ENCODE measurements at regions of chr5 and their contacts with region 1.

Region 1: DNA sequence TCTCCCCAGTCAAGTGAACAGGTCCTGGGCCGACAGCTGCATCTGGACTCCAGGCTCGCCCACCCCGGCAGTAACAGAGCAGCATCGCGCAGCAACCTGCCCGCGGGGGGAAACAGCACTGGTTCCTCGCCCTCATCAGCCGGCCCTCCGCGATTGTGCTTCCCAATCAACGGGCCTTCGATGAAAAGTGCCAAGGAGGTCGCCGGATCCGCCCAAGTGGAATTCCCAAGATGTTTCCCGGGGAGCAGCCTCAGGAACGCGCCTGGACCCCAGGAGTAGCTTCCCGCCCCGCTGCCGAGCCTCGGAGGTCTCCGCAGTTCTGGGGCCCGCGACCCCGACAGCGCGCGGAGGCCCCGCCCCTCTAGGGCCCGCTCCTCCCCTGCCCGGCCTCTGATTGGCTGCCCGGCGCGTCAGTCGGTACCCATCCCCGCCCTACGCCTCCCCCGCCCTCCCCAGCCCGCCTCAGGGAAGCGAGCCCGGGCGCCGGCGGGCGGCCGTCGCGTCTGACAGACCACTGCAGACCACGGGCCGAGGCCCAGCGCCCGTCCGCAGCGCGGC is at the start of gene OTULINL:
- DNase-seq: peak; percentile 87
- ATAC-seq: peak; percentile 87
- H3K4me3 ChIP-seq: peak within 1 kb of the TSS; percentile 81
- H3K27ac ChIP-seq: peak within 1 kb of the TSS; percentile 97
- H3K4me1 ChIP-seq: peaks cover 43% of the 10 kb centered on the region
- H3K27me3 ChIP-seq: no peaks in the 10 kb centered on the region
- CTCF ChIP-seq: no peak
- total RNA-seq, gene OTULINL: 46.4 and 54.6 TPM in 2 replicates

Region 2: DNA sequence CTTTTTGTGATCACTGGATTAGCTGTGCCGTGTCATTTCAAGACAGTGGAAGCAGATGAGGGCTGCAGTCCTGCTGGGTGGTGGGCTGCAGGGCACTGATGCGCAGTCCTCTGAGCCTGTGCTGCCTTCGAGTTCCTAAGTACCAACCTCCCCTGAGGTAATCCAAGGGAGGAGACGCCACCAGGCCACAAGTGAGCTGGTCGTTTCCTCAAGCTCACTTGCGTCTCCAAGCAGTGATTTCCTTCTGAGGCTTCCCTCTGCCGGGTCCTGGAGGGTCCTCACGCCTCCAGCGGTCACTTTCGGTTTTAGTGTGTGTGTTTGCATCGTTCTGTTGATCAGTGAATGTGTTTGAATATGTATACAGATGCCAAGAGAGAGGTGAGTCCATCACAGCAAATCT is 322.6 kb before region 1 on chr5:
- CTCF ChIA-PET with region 1: no interaction called
- POLR2A ChIA-PET with region 1: no interaction called
- intact Hi-C with region 1: no loop called
- DNase-seq: no peak
- ATAC-seq: no peak
- H3K4me3 ChIP-seq: no peak overlapping the region
- H3K27ac ChIP-seq: no peak overlapping the region
- H3K4me1 ChIP-seq: peaks cover 63% of the 10 kb centered on the region
- H3K27me3 ChIP-seq: no peaks in the 10 kb centered on the region
- CTCF ChIP-seq: no peak

Region 3: GRCh38 chr5:14405267-14405666 is 176.1 kb before region 1 on chr5:
- CTCF ChIA-PET with region 1: no interaction called
- POLR2A ChIA-PET with region 1: interaction called, 4 read pairs
- intact Hi-C with region 1: loop called (anchors 2 kb)
- DNase-seq: peak; percentile 72
- ATAC-seq: peak; percentile 58
- H3K4me3 ChIP-seq: peak overlapping the region; percentile 35
- H3K27ac ChIP-seq: peak overlapping the region; percentile 90
- H3K4me1 ChIP-seq: peaks cover 42% of the 10 kb centered on the region
- H3K27me3 ChIP-seq: no peaks in the 10 kb centered on the region
- CTCF ChIP-seq: peak; percentile 83

Region 4: DNA sequence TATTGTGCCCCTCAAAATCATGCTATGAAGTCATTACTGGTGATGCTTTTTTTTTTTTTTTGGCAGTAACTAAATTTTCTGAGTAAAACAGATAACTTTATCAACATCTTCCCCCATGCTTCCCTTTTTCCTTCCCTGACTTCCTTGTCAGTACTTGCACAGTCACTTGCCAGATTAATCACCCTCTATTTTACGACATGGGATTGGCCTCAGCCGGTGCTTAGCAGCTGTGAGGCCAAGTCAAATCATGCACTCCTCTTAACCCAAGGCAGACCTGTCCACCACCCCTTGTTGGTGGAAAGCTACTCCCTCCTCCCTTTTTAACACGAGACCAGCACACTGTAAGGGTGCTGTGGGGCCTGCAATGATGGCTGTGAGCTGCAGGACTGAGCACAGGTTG is 117.8 kb before region 1 on chr5:
- CTCF ChIA-PET with region 1: no interaction called
- POLR2A ChIA-PET with region 1: no interaction called
- intact Hi-C with region 1: loop called (anchors 5 kb)
- DNase-seq: peak; percentile 89
- ATAC-seq: peak; percentile 93
- H3K4me3 ChIP-seq: no peak overlapping the region
- H3K27ac ChIP-seq: peak overlapping the region; percentile 90
- H3K4me1 ChIP-seq: peaks cover 39% of the 10 kb centered on the region
- H3K27me3 ChIP-seq: no peaks in the 10 kb centered on the region
- CTCF ChIP-seq: no peak

Region 5: DNA sequence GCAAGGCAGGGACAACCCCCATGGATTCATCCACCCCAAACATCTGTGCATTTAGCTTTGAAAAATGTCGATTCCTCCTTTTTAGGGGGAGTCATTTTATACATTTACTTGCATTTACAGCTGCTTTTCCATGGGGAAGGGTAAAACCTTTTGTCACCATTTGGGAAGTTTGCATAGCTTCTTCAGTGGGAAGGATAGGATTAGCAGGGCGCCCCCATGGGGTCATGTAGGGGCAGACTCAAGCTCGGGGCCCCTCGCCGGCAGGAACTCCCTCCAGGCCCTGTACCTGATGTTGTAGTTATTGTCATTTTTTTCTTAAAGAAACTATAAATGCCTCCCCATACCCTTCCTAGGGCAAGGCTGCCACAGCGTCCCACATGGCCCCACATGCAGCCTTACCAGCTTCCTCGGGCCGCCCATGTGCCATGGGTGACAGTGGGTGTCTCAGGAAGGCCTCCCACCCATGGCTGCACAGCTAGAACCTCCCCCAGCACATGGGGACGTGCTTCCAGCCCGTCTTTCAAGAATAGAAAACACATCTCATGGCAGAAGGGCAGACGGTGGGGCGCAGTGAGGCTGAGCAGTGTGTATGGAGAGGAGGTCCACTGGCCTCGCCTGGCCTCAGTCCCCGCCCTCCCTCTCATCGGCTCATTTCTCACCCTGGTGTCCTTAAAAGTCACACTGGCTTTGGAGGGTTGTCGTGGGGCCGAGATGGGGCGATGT is 75.9 kb before region 1 on chr5:
- CTCF ChIA-PET with region 1: interaction called, 12 read pairs
- POLR2A ChIA-PET with region 1: interaction called, 4 read pairs
- intact Hi-C with region 1: loop called (anchors 5 kb)
- DNase-seq: no peak
- ATAC-seq: no peak
- H3K4me3 ChIP-seq: no peak overlapping the region
- H3K27ac ChIP-seq: no peak overlapping the region
- H3K4me1 ChIP-seq: no peaks in the 10 kb centered on the region
- H3K27me3 ChIP-seq: no peaks in the 10 kb centered on the region
- CTCF ChIP-seq: peak; percentile 51

Region 6: DNA sequence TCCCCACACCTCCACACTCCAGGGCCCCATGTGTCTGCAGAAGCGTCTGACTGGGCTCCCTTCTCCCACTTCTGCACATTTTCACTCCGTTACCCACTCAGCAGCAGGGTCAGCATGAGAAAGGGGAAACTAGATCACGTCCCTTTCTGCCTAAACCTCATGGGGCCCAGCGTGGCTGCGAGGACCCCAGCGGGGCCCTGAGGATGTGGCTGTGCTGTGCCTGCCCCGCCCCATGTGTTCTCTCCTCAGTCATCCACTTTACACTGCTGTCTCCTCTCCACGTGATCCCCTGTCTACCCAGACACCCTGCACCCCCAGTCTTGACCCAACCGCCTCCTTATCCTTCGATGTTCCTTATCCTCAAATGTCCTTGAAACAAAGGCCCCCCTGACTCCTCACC is 59.7 kb before region 1 on chr5:
- CTCF ChIA-PET with region 1: no interaction called
- POLR2A ChIA-PET with region 1: no interaction called
- intact Hi-C with region 1: loop called (anchors 5 kb)
- DNase-seq: no peak
- ATAC-seq: no peak
- H3K4me3 ChIP-seq: no peak overlapping the region
- H3K27ac ChIP-seq: no peak overlapping the region
- H3K4me1 ChIP-seq: no peaks in the 10 kb centered on the region
- H3K27me3 ChIP-seq: no peaks in the 10 kb centered on the region
- CTCF ChIP-seq: no peak

Region 7: DNA sequence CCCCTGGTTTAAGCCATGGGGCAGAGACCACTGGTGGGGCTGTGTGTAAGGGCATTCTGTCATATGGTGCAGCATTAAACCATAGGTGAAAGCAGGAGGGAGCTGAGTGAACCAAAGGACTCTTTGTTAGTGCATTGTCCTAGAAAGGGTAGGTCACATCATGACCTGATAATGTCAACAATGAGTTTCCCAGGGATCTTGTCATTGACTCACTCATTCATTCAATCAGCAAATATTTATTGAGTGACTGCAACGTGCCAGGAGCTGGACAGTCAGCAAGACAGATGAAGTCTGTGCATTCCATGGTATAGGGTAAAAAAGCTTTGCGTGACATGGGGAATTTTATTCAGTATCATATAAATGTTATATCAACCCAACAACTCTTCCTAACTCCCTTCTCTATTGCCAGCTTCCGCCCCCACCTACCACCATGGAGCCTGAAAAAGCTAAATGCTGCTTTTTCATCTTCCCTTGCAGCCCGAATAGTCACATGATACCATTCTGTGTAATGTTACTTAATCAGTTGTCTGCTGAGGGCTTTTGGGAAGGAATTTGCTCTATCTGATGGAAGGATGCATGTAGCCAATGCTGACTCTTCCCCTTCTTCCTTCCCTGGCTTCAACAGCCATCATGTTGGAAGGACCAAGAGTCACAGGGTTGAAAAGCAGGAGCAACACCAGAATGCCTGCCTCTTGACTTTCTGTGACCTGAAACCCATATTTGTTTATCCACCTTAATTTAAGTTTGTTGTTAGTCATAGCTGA is 11.3 kb before region 1 on chr5:
- CTCF ChIA-PET with region 1: interaction called, 3 read pairs
- POLR2A ChIA-PET with region 1: no interaction called
- intact Hi-C with region 1: loop called (anchors 1 kb)
- DNase-seq: peak; percentile 99
- ATAC-seq: peak; percentile 90
- H3K4me3 ChIP-seq: peak overlapping the region; percentile 16; the same call in 1 of the 2 replicates
- H3K27ac ChIP-seq: peak overlapping the region; percentile 98
- H3K4me1 ChIP-seq: peaks cover 38% of the 10 kb centered on the region
- H3K27me3 ChIP-seq: no peaks in the 10 kb centered on the region
- CTCF ChIP-seq: no peak

Region 8: DNA sequence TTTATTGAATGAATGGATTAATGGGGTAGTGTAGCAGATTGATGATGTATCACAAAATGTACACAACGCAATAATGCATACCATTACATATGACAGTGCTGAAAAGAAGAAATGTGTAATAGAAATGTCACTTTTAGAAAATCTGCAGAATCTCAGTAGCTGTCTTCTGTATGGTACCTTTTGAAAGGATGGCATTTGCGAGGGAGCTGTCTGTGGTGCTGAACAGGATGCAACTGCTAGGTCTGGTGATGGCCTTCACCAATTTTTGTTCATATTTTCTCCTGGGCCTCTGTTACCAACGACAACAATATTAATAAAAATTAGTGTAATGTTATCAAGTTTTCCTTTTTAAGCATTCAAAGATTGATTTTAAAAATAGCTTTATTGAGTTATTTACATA is 46.9 kb after region 1 on chr5:
- CTCF ChIA-PET with region 1: no interaction called
- POLR2A ChIA-PET with region 1: no interaction called
- intact Hi-C with region 1: loop called (anchors 2 kb)
- DNase-seq: peak; percentile 72
- ATAC-seq: peak; percentile 42
- H3K4me3 ChIP-seq: no peak overlapping the region
- H3K27ac ChIP-seq: no peak overlapping the region
- H3K4me1 ChIP-seq: peaks cover 16% of the 10 kb centered on the region
- H3K27me3 ChIP-seq: no peaks in the 10 kb centered on the region
- CTCF ChIP-seq: no peak

Measured in PC-3 (cell line).